ENCODE measurements at regions of chr17 and their contacts with region 1.

Region 1: GRCh38 chr17:18141210-18141803 is 32.8 kb downstream of the MYO15A start:
- DNase-seq: peak; percentile 55

Region 2: DNA sequence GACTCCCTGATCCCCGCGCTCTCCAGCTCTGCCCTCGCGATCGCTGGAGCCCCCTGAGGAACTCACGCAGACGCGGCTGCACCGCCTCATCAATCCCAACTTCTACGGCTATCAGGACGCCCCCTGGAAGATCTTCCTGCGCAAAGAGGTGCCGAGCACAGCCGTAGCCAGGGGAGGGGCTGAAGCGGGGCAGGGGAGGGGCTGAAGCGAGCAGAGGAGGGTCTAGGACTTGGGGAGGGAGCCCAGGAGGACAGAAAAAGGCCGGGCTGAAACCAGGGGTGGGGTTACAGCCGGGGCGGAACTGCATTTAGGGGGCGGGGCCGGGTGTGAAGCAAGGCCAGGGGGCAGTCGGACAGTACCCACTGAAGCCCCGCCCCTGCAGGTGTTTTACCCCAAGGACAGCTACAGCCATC is 12.4 kb after region 1 on chr17:
- CTCF ChIA-PET with region 1: interaction called, 24 read pairs
- POLR2A ChIA-PET with region 1: interaction called, 8 read pairs
- DNase-seq: peak; percentile 86